ENCODE measurements at regions of chr16 and their contacts with region 1.

Region 1: DNA sequence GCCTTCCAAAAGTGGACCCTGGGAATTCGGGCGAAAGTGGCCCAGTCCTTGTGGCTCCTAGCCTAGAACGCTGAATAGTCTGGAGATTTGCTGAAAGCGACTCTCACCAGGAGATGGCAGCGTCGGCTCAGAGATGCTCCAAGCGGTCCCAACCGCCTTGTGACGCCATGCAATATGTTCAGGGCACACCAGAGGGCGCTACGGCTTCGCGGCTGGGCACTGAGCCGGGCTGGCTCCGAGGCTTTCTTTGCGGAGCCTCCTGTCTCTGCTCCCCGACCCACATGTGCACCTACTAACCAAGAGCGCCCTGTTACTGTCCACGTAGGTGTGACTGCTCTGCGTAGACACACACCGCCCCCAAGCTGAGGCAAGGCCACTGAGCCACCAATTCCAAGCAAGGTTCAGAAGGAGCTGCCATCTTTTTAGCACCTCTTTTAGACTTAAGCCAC is 36.9 kb downstream of the SYCE1L start:
- DNase-seq: peak; percentile 77 to 92 (median 88)
- H3K4me3 ChIP-seq: peak overlapping the region in 48 of 59 donors; percentile 6 to 59 (median 34)
- H3K27ac ChIP-seq: peak overlapping the region in 1 of 59 donors; percentile 10
- H3K27me3 ChIP-seq: peaks cover 0 to 11% (median 0%) of the 10 kb centered on the region in 45 donors
- CTCF ChIP-seq: peak; percentile 92 to 100 (median 100)

Region 2: GRCh38 chr16:77437859-77438258 is 201.8 kb after region 1 on chr16:
- intact Hi-C with region 1: loop called in 1 of 2 experiments (anchors 5 kb)
- DNase-seq: no peak
- H3K4me3 ChIP-seq: no peak overlapping the region
- H3K27ac ChIP-seq: no peak overlapping the region
- H3K27me3 ChIP-seq: peaks cover 0 to 50% (median 27%) of the 10 kb centered on the region in 45 donors
- CTCF ChIP-seq: peak in 7 of 56 donors; percentile 9 to 49 (median 39)

Region 3: GRCh38 chr16:77584205-77584859 is 348.2 kb after region 1 on chr16:
- intact Hi-C with region 1: loop called (anchors 1 kb)
- DNase-seq: peak in 6 of 10 donors; percentile 25 to 70 (median 52)
- H3K4me3 ChIP-seq: no peak overlapping the region
- H3K27ac ChIP-seq: no peak overlapping the region
- H3K27me3 ChIP-seq: peaks cover 0 to 31% (median 7%) of the 10 kb centered on the region in 45 donors
- CTCF ChIP-seq: peak; percentile 84 to 99 (median 94)

Region 4: GRCh38 chr16:77660311-77660710 is 424.2 kb after region 1 on chr16:
- intact Hi-C with region 1: loop called in 1 of 2 experiments (anchors 2 kb)
- DNase-seq: no peak
- H3K4me3 ChIP-seq: peak overlapping the region in 12 of 59 donors; percentile 1 to 46 (median 27)
- H3K27ac ChIP-seq: no peak overlapping the region
- H3K27me3 ChIP-seq: peaks cover 0 to 44% (median 4%) of the 10 kb centered on the region in 45 donors
- CTCF ChIP-seq: peak in 55 of 56 donors; percentile 13 to 71 (median 58)

Region 5: GRCh38 chr16:77971306-77972271 is 735.5 kb after region 1 on chr16:
- intact Hi-C with region 1: loop called in 1 of 2 experiments (anchors 10 kb)
- DNase-seq: peak; percentile 66 to 89 (median 82)
- H3K4me3 ChIP-seq: no peak overlapping the region
- H3K27ac ChIP-seq: no peak overlapping the region
- H3K27me3 ChIP-seq: peaks cover 0 to 16% (median 0%) of the 10 kb centered on the region in 45 donors
- CTCF ChIP-seq: peak; percentile 63 to 94 (median 88)

Measured in dorsolateral prefrontal cortex (tissue), 120 donors.